H1 (cell line): ENCODE measurements at regions of chr7 and their contacts with region 1.

Region 1: DNA sequence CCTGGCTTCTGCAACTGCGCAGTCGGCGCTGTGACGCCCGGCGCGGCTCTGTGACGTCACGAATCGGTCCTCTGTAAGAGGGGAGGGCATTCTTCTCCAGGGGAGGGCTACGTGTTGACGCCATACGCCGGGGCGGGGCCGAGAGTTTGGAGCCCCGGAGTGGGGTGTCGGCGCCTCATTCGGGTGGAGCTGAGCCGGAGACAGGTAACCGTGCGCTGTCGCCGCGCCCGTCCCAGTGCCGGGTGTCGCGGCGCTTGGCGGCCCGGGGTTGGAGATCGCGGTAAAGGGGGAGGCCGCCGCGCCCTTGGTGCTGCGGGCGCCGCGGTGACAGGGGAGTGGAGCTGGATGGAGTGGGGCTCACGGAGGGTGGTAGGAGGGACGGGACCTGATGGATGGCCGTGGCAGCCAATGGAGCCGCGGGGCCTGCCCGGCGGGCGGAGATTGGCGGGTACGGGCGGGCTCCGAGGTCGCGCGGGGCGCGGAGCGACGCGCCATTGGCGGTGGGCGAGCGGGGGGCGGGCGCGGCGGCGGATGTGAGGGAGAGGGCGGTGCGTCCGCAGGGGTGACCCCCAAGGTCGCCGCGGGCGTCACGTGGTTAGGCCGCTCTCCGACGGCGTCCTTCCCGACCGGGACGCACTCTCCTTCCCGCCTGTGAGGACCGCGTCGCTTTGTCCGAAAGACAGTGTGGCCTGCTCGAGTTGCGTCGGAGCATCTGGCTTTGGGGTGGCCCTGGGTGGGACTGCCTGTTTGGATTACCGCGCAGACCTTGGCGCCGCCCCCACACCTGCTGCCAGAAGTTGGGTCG is at the start of gene OGDH:
- DNase-seq: peak; percentile 93 to 100
- H3K4me3 ChIP-seq: peak within 1 kb of the TSS; percentile 72 to 92 (median 84)
- H3K27ac ChIP-seq: peak within 1 kb of the TSS; percentile 93
- H3K4me1 ChIP-seq: peaks cover 0 to 7% (median 1%) of the 10 kb centered on the region in 4 experiments; a peak in 2 of 7 replicates
- H3K27me3 ChIP-seq: no peaks in the 10 kb centered on the region
- CTCF ChIP-seq: no peak
- EP300 ChIP-seq: peak in 1 of 2 experiments; percentile 3; a peak in 1 of 3 replicates
- POLR2A ChIP-seq: peak; percentile 85 to 94
- RAD21 ChIP-seq: no peak
- total RNA-seq, gene OGDH: 89.1 and 91.6 TPM in 2 replicates

Region 2: GRCh38 chr7:44573464-44574286 is 33.0 kb before region 1 on chr7 and contains the start of gene DDX56:
- CTCF ChIA-PET with region 1: interaction called, 4 read pairs
- POLR2A ChIA-PET with region 1: interaction called, 11 read pairs
- DNase-seq: peak; percentile 75 to 89
- H3K4me3 ChIP-seq: peak within 1 kb of the TSS; percentile 63 to 95 (median 88)
- H3K27ac ChIP-seq: peak within 1 kb of the TSS; percentile 72
- H3K4me1 ChIP-seq: peaks cover 4 to 9% (median 5%) of the 10 kb centered on the region in 4 experiments; a peak in 5 of 7 replicates
- H3K27me3 ChIP-seq: no peaks in the 10 kb centered on the region
- CTCF ChIP-seq: no peak
- EP300 ChIP-seq: no peak
- POLR2A ChIP-seq: peak; percentile 73 to 95
- RAD21 ChIP-seq: 0 out of 4 replicates have a peak, but pooled peaks of 1 of the 2 experiments have one; percentile 0
- total RNA-seq, gene DDX56: 55.4 and 56.9 TPM in 2 replicates

Region 3: GRCh38 chr7:44581879-44582603 is 24.6 kb before region 1 on chr7 and contains the start of gene TMED4:
- CTCF ChIA-PET with region 1: interaction called, 4 read pairs
- POLR2A ChIA-PET with region 1: interaction called, 12 read pairs
- DNase-seq: peak; percentile 96 to 100
- H3K4me3 ChIP-seq: peak within 1 kb of the TSS; percentile 74 to 95 (median 80)
- H3K27ac ChIP-seq: peak within 1 kb of the TSS; percentile 65
- H3K4me1 ChIP-seq: peaks cover 0 to 7% (median 1%) of the 10 kb centered on the region in 4 experiments; a peak in 4 of 7 replicates
- H3K27me3 ChIP-seq: no peaks in the 10 kb centered on the region
- CTCF ChIP-seq: no peak
- EP300 ChIP-seq: no peak
- POLR2A ChIP-seq: peak; percentile 62 to 80
- RAD21 ChIP-seq: no peak
- total RNA-seq, gene TMED4: 41.1 and 44.9 TPM in 2 replicates

Region 4: DNA sequence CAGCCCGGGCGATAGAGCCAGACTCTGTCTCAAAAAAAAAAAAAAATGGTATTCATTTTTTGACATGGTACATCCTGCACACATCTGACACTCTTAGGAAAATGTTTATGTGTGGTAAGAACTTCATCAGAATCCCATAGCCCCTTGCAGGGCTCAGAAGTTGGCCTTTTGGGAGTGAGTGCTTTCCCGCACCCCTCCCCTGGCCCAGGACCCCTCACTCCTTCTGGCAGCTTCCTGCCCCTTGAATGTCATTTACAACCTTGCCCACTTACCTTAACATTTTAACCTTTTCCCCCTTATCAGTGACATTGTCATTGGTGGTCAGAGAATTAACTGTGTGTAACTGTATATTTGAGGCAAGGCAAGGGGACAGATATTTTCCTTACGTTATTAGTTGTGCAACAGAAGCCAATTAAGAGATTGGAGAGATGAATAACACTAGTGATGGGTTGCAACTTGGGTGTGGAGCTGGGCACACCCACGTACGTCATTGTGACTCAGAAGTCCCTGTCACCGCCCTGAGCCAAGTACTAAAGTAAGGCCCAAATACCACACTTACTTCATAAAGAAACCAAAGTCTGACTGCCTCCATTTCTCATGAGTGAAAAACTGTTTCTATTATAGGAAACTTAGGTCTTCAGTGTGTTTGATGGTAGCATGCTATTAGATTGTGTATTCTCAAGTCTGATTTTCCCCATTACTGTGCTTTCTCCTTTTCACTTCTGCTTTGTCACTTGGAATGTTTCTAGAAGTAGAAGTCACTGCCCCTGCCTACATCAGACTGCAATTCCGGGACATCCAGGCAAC is 31.3 kb after region 1 on chr7:
- CTCF ChIA-PET with region 1: no interaction called
- POLR2A ChIA-PET with region 1: interaction called, 15 read pairs
- DNase-seq: peak in 1 of 2 experiments; percentile 23
- H3K4me3 ChIP-seq: no peak overlapping the region
- H3K27ac ChIP-seq: no peak overlapping the region
- H3K4me1 ChIP-seq: peaks cover 16 to 19% (median 18%) of the 10 kb centered on the region in 4 experiments
- H3K27me3 ChIP-seq: no peaks in the 10 kb centered on the region
- CTCF ChIP-seq: no peak
- EP300 ChIP-seq: no peak
- POLR2A ChIP-seq: no peak
- RAD21 ChIP-seq: no peak

Region 5: GRCh38 chr7:44748045-44748947 is 141.6 kb after region 1 on chr7 and contains the start of gene ZMIZ2:
- CTCF ChIA-PET with region 1: no interaction called
- POLR2A ChIA-PET with region 1: interaction called, 18 read pairs
- DNase-seq: peak; percentile 38 to 98
- H3K4me3 ChIP-seq: peak within 1 kb of the TSS; percentile 63 to 98 (median 91)
- H3K27ac ChIP-seq: peak within 1 kb of the TSS; percentile 83; the same call in 1 of the 2 replicates
- H3K4me1 ChIP-seq: peaks cover 0 to 26% (median 11%) of the 10 kb centered on the region in 4 experiments; a peak in 6 of 7 replicates
- H3K27me3 ChIP-seq: no peaks in the 10 kb centered on the region
- CTCF ChIP-seq: no peak; a peak in 1 of 4 replicates
- EP300 ChIP-seq: 0 out of 3 replicates have a peak, but pooled peaks of 1 of the 2 experiments have one; percentile 27
- POLR2A ChIP-seq: peak; percentile 0 to 33; a peak in 2 of 3 replicates
- RAD21 ChIP-seq: no peak
- total RNA-seq, gene ZMIZ2: 66.4 and 72.2 TPM in 2 replicates